Endothelial cell of umbilical vein (primary cell): ENCODE measurements at regions of chr19 and their contacts with region 1.

Region 1: DNA sequence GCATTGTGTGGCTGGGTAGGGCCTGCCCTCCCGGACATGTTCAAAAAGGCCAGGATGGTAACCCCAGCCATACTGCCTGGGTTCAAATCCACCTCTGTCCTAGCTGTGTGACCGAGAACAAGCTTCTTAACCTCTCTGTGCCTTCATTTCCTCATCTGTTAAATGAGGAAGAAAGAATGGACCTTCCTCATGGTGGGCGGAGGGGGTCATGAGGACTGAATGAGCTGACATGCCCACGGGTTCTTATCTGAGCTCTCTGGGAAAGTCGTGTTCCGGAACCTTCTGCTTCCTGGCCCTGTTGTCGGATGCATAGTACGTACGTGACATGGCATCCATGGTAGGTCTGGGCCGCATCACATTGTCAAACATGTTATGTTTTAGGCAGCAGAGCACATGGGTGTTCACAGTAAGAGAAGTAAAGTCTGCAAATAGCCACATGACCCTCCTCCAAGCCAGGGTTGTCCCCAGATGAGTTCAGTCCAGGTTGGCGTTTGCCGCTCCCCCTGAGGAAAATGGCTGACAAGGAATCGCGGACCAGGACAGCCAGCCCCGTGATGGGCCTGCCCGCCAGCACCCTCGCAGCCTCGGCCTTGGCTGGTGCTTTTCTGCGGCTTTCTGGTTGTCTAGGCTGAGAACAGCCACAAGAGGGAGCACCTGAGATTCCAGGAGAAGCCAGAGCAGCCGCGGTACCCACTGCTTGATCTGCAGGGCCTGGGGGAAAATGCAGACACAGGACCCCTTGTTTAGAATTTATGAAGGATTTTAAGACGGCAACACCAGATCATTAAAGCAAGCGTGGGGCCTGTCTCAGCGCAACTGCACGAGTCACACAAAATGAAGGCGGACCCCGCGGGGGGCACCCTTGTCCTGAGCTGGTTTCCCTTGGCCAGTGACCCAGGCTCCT is 2.4 kb upstream of the NTN5 start:
- DNase-seq: peak; percentile 88
- H3K4me3 ChIP-seq: no peak overlapping the region
- H3K27ac ChIP-seq: no peak overlapping the region
- H3K4me1 ChIP-seq: no peaks in the 10 kb centered on the region
- H3K27me3 ChIP-seq: no peaks in the 10 kb centered on the region
- CTCF ChIP-seq: peak; percentile 86 to 92
- POLR2A ChIP-seq: no peak

Region 2: GRCh38 chr19:48588670-48589399 is 86.3 kb before region 1 on chr19:
- CTCF ChIA-PET with region 1: no interaction called
- POLR2A ChIA-PET with region 1: no interaction called
- dilution Hi-C with region 1: no loop called
- intact Hi-C with region 1: no loop called
- DNase-seq: peak; percentile 74
- H3K4me3 ChIP-seq: peak overlapping the region in 1 of 3 experiments; percentile 3
- H3K27ac ChIP-seq: no peak overlapping the region
- H3K4me1 ChIP-seq: no peaks in the 10 kb centered on the region
- H3K27me3 ChIP-seq: no peaks in the 10 kb centered on the region
- CTCF ChIP-seq: peak; percentile 97 to 98
- POLR2A ChIP-seq: no peak

Region 3: GRCh38 chr19:48689449-48689848 is 14.3 kb after region 1 on chr19:
- CTCF ChIA-PET with region 1: interaction called, 15 read pairs
- POLR2A ChIA-PET with region 1: no interaction called
- dilution Hi-C with region 1: no loop called
- intact Hi-C with region 1: no loop called
- DNase-seq: no peak
- H3K4me3 ChIP-seq: no peak overlapping the region
- H3K27ac ChIP-seq: no peak overlapping the region
- H3K4me1 ChIP-seq: no peaks in the 10 kb centered on the region
- H3K27me3 ChIP-seq: peaks cover 0 to 2% of the 10 kb centered on the region in 2 experiments
- CTCF ChIP-seq: no peak
- POLR2A ChIP-seq: no peak

Region 4: DNA sequence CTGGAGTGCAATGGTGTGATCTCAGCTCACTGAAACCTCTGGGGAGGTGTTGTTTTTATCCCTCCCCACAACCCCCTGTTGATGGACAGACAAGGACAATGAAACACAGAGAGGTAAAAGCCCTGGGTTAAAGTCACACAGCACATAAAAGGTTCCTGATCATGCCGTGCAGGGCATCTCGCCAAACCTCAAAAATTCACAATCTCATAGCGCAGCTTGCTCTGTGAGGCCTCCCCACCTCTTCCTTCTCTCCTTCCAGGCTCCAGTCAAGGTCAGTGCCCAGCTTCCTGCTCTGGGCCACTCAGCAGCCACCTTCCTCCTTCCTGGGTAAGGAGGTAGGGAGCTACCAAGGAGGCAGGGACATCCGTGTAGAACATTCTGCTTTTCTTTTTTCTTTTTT is 22.9 kb after region 1 on chr19:
- CTCF ChIA-PET with region 1: interaction called, 11 read pairs
- POLR2A ChIA-PET with region 1: no interaction called
- dilution Hi-C with region 1: no loop called
- intact Hi-C with region 1: no loop called
- DNase-seq: peak; percentile 60
- H3K4me3 ChIP-seq: no peak overlapping the region
- H3K27ac ChIP-seq: no peak overlapping the region
- H3K4me1 ChIP-seq: peaks cover 16% of the 10 kb centered on the region
- H3K27me3 ChIP-seq: no peaks in the 10 kb centered on the region
- CTCF ChIP-seq: no peak
- POLR2A ChIP-seq: no peak

Region 5: GRCh38 chr19:48713864-48714758 is 38.9 kb after region 1 on chr19:
- CTCF ChIA-PET with region 1: interaction called, 31 read pairs
- POLR2A ChIA-PET with region 1: no interaction called
- dilution Hi-C with region 1: no loop called
- intact Hi-C with region 1: loop called (anchors 1 kb)
- DNase-seq: peak; percentile 100
- H3K4me3 ChIP-seq: peak overlapping the region; percentile 37 to 63 (median 50)
- H3K27ac ChIP-seq: peak overlapping the region; percentile 52
- H3K4me1 ChIP-seq: peaks cover 15% of the 10 kb centered on the region
- H3K27me3 ChIP-seq: no peaks in the 10 kb centered on the region
- CTCF ChIP-seq: no peak
- POLR2A ChIP-seq: no peak

Region 6: DNA sequence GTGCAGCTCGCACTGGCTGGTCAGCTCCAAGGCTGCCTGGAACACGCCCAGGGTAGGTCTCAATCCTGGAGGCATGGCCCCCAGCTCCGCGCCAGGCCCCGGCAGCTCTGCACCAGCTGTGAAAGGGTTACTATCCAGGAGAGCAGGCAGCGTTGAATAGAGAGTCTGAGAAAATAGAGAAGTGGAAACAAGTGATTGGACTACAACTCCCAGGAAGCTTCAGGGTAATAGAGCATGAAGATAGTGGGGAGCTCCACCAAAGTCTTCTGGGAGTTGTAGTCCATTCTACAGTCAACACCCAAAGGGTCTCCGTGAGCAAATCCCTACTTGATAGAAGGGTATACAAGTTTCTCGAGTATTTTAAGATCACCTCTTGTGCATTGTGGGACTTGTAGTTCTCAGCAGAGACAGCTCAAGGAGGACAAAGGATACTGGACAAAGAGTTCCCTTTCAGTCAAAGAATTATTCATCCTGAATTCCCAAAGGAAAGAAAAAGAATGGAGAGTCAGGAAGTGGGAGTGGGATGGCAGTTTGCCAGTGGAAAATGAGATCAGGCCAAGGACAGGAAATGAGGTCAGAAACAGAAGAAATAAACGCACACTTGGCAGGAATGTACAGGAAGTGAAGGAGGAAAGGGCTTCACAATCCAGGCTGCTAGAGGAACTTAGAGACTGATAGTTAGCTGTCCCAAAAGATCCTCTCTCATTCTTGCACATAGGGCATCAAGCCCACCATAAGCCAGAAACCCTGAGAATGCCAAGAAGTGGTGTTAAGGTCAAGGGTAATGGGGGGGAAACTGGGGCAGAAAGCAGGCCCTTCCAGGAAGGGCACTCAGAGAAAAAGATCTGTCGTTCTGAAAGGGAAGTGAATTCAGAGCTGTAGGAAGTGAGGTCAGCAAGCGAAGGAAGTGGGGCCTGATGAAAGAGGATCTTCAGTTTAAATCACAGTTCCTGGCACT is 49.9 kb after region 1 on chr19:
- CTCF ChIA-PET with region 1: interaction called, 21 read pairs
- POLR2A ChIA-PET with region 1: interaction called, 3 read pairs
- dilution Hi-C with region 1: no loop called
- intact Hi-C with region 1: loop called (anchors 1 kb)
- DNase-seq: peak; percentile 100
- H3K4me3 ChIP-seq: no peak overlapping the region
- H3K27ac ChIP-seq: peak overlapping the region; percentile 97
- H3K4me1 ChIP-seq: peaks cover 33% of the 10 kb centered on the region
- H3K27me3 ChIP-seq: no peaks in the 10 kb centered on the region
- CTCF ChIP-seq: no peak
- POLR2A ChIP-seq: no peak

Region 7: DNA sequence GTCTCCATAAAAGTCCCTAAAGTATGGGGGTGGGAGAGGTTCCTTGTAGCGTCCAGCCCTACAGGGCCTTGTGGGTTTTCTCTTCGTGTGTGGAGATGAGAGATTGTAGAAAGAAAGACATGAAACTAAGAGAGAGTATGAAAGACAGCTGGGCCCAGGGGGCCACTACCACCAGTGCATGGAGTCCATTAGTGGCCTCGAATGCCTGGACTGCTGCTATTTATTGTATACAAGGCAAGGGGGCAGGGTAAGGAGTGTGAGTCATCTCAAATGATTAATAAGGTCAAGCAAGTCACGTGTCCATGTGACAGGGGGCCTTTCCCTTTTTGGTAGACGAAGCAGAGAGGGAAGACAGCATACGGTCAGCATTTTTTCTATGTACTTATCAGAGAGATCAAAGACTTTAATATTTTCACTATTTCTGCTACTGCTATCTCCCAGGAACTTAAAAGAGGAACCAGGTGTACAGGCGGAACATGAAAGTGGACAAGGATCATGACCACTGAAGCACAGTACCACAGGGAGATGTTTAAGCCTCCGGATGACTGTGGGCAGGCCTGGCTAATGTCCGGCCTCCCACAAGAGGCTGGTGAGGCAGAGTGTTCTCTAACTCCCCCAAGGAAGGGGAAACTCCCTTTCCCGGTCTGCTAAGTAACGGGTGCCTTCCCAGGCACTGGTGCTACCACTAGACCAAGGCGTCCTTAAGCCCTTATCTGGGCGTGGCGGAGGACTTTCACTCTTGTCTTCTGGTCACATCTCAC is 105.6 kb after region 1 on chr19:
- CTCF ChIA-PET with region 1: interaction called, 26 read pairs
- POLR2A ChIA-PET with region 1: no interaction called
- dilution Hi-C with region 1: no loop called
- intact Hi-C with region 1: no loop called
- DNase-seq: peak; percentile 43
- H3K4me3 ChIP-seq: no peak overlapping the region
- H3K27ac ChIP-seq: peak overlapping the region; percentile 53
- H3K4me1 ChIP-seq: peaks cover 9% of the 10 kb centered on the region
- H3K27me3 ChIP-seq: no peaks in the 10 kb centered on the region
- CTCF ChIP-seq: no peak
- POLR2A ChIP-seq: no peak

Region 8: DNA sequence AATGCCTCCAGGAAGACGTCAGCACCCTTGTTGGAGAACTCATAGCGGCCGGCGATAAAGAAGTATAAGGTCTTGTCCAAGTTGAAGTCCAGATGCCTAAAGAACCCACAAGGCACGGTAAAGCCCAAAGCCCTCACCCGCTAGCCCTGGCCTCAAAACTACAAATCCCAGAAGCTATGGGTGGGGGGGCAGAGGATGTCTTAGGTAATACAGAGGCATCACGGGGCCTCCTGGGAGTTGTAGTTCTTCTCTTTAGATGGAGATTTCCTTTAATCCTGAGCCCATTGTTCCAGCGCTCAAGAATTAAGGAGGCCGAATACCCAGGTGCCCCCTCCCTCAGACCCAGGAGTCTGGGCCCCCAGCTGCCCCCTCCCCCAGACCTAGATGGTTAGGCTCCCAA is 307.1 kb after region 1 on chr19:
- CTCF ChIA-PET with region 1: no interaction called
- POLR2A ChIA-PET with region 1: no interaction called
- dilution Hi-C with region 1: no loop called
- intact Hi-C with region 1: no loop called
- DNase-seq: no peak
- H3K4me3 ChIP-seq: no peak overlapping the region
- H3K27ac ChIP-seq: no peak overlapping the region
- H3K4me1 ChIP-seq: no peaks in the 10 kb centered on the region
- H3K27me3 ChIP-seq: no peaks in the 10 kb centered on the region
- CTCF ChIP-seq: no peak
- POLR2A ChIP-seq: no peak